Dorsolateral prefrontal cortex (tissue), 120 donors: ENCODE measurements at regions of chr11 and their contacts with region 1.

Region 1: GRCh38 chr11:37817727-37818270 is 1219.8 kb upstream of the RAG2 start:
- DNase-seq: no peak
- H3K4me3 ChIP-seq: no peak overlapping the region
- H3K27ac ChIP-seq: no peak overlapping the region
- H3K27me3 ChIP-seq: no peaks in the 10 kb centered on the region
- CTCF ChIP-seq: no peak

Region 2: DNA sequence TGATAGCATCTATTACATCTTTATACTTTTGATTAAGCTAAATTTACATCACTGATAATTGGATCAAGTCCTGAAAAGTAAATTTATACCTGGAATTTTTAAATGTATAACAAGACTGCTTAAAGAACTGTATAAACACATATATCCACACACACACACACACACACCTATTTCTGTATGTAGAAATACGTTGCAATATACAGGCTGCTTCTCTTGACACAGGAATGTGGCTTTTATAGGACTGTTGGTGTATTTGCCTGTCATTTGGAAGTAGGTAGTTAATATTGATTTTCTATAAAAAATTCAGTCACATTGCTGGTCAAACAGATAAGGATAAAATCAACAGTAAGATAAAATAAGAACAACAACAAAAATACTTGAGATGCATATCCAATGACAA is 511.2 kb before region 1 on chr11:
- intact Hi-C with region 1: loop called in 1 of 2 experiments (anchors 10 kb)
- DNase-seq: no peak
- H3K4me3 ChIP-seq: no peak overlapping the region
- H3K27ac ChIP-seq: no peak overlapping the region
- H3K27me3 ChIP-seq: no peaks in the 10 kb centered on the region
- CTCF ChIP-seq: no peak